ENCODE measurements at regions of chr3 and their contacts with region 1.

Region 1: GRCh38 chr3:88113311-88114162 is 36.2 kb upstream of the C3orf38 start:
- DNase-seq: no peak
- ATAC-seq: peak; percentile 89
- H3K4me3 Mint-ChIP-seq: no peak overlapping the region
- H3K27ac Mint-ChIP-seq: no peak overlapping the region
- H3K4me1 Mint-ChIP-seq: peaks cover 7% of the 10 kb centered on the region
- H3K27me3 Mint-ChIP-seq: no peaks in the 10 kb centered on the region
- CTCF ChIP-seq: no peak

Region 2: DNA sequence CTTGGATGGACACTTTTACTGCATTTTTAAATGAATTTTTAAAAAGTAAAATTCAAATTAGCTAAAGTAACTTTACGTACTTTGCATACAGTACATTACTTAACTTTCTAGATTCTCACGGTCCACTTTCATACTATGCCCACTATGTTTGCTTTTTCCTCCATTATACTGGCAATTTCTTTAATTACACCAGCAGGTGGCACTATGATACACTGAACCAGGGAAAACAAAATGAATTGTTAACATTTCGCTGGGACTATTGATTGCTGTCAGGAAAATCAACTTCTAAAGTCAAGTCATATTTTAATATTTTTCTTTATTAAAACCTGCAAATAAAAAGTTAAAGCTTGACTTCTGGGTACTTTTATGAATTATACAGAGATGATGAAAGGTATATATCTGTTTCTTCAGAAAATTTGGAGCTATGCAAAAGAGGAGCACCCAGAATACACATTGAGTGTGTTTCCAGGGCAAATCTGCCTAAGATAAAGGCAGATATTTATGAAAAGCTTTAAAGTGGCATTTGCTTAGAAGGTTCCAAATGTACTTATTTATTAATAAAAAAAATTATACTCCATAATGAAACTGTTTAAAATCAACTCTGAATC is 815.3 kb before region 1 on chr3:
- CTCF ChIA-PET with region 1: interaction called, 5 read pairs
- POLR2A ChIA-PET with region 1: no interaction called
- intact Hi-C with region 1: loop called (anchors 1 kb)
- DNase-seq: no peak
- ATAC-seq: peak; percentile 50
- H3K4me3 Mint-ChIP-seq: no peak overlapping the region
- H3K27ac Mint-ChIP-seq: no peak overlapping the region
- H3K4me1 Mint-ChIP-seq: no peaks in the 10 kb centered on the region
- H3K27me3 Mint-ChIP-seq: no peaks in the 10 kb centered on the region
- CTCF ChIP-seq: no peak

Region 3: GRCh38 chr3:87553058-87553457 is 560.5 kb before region 1 on chr3:
- CTCF ChIA-PET with region 1: no interaction called
- POLR2A ChIA-PET with region 1: no interaction called
- intact Hi-C with region 1: loop called (anchors 10 kb)
- DNase-seq: no peak
- ATAC-seq: no peak
- H3K4me3 Mint-ChIP-seq: no peak overlapping the region
- H3K27ac Mint-ChIP-seq: no peak overlapping the region
- H3K4me1 Mint-ChIP-seq: no peaks in the 10 kb centered on the region
- H3K27me3 Mint-ChIP-seq: peaks cover 3% of the 10 kb centered on the region
- CTCF ChIP-seq: no peak

Region 4: DNA sequence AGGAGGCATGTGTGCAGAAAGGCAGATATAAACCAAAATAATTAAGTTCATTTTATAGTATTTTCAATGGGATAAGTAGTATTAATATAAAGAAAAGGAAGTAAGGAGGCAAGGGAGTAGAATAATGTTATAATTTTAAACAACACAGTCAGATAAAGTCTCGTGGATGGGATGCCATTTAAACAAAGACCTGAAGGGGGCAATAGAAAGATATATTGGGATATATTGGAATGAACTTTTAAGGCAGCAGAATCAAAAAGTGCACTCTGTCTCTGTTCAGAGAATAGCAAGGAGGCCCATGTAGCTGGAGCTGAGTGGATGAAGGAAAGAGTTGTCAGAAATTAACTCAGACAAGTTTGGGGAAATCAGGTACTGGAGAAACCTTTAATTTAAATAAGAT is 213.5 kb before region 1 on chr3:
- CTCF ChIA-PET with region 1: no interaction called
- POLR2A ChIA-PET with region 1: no interaction called
- intact Hi-C with region 1: loop called (anchors 1 kb)
- DNase-seq: no peak
- ATAC-seq: no peak
- H3K4me3 Mint-ChIP-seq: no peak overlapping the region
- H3K27ac Mint-ChIP-seq: no peak overlapping the region
- H3K4me1 Mint-ChIP-seq: no peaks in the 10 kb centered on the region
- H3K27me3 Mint-ChIP-seq: no peaks in the 10 kb centered on the region
- CTCF ChIP-seq: no peak